Gastrocnemius medialis (tissue), 4 donors: ENCODE measurements at regions of chr11 and their contacts with region 1.

Region 1: GRCh38 chr11:130069684-130070108 is at the start of gene APLP2:
- DNase-seq: peak; percentile 99
- ATAC-seq: peak; percentile 88 to 91
- H3K4me3 ChIP-seq: peak within 1 kb of the TSS; percentile 82 to 90 (median 86)
- H3K27ac ChIP-seq: peak within 1 kb of the TSS; percentile 88 to 94 (median 90)
- H3K4me1 ChIP-seq: peaks cover 14 to 24% of the 10 kb centered on the region in 2 donors
- H3K27me3 ChIP-seq: no peaks in the 10 kb centered on the region
- CTCF ChIP-seq: no peak
- POLR2A ChIP-seq: peak; percentile 85 to 92
- total RNA-seq, gene APLP2: 80.4 to 110 (median 82.1) TPM

Region 2: GRCh38 chr11:129593098-129593497 is 476.6 kb before region 1 on chr11:
- in situ Hi-C with region 1: no loop called
- intact Hi-C with region 1: no loop called
- DNase-seq: no peak
- ATAC-seq: no peak
- H3K4me3 ChIP-seq: no peak overlapping the region
- H3K27ac ChIP-seq: no peak overlapping the region
- H3K4me1 ChIP-seq: no peaks in the 10 kb centered on the region
- H3K27me3 ChIP-seq: no peaks in the 10 kb centered on the region
- CTCF ChIP-seq: no peak
- POLR2A ChIP-seq: no peak

Region 3: DNA sequence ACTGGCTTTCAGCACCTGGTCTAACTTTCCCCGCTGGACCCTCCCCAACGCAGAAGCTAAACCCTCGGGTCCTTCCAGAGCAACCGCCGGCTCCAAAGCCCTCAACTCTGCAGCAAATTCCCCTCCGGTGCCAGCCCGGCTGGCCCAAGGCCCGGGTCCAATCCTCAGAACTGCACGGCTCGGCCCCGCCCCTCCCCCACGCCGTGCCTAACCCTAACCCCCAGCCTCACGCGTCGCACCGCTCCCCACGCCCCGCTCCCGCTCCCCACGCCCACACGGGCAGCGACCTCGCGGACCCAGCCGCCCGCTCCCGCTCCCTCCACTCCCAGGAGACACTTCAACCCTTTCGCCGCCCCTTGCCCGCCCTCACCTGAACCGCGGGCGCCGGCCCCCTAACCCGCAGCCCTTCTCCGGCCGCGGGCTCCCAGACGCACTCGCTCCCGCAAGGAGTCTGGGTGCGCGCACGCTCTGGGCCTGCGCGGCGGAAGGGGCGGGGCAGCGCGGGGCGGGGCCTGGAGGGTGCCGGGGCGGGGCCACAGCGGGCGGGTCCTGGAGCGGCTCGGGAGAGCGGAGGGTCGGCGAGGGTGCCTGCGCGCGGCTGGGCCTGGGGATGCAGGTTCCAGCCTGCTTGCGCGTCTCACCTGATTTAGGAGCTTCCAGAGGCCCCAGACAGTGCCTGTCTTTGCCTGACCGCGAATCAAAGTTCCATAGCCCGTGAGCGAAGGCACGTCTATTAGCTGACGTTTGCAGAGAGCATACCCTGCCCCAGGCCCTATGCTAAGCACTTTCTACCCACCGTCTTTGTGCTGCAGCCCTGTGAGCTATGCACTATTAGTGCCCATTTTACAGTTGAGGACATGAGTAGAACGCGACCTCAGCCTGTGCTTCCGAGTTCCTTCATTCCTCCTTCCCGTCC is 174.3 kb before region 1 on chr11 and contains the start of gene NFRKB:
- in situ Hi-C with region 1: no loop called
- intact Hi-C with region 1: loop called (anchors 5 kb)
- DNase-seq: peak; percentile 59 to 73
- ATAC-seq: peak; percentile 91 to 93
- H3K4me3 ChIP-seq: peak within 1 kb of the TSS; percentile 76 to 100 (median 96)
- H3K27ac ChIP-seq: peak within 1 kb of the TSS; percentile 85 to 96 (median 92)
- H3K4me1 ChIP-seq: peaks cover 13 to 18% of the 10 kb centered on the region in 2 donors
- H3K27me3 ChIP-seq: no peaks in the 10 kb centered on the region
- CTCF ChIP-seq: no peak
- POLR2A ChIP-seq: peak; percentile 53 to 57
- total RNA-seq, gene NFRKB: 22.5 to 34.3 (median 23.4) TPM

Region 4: DNA sequence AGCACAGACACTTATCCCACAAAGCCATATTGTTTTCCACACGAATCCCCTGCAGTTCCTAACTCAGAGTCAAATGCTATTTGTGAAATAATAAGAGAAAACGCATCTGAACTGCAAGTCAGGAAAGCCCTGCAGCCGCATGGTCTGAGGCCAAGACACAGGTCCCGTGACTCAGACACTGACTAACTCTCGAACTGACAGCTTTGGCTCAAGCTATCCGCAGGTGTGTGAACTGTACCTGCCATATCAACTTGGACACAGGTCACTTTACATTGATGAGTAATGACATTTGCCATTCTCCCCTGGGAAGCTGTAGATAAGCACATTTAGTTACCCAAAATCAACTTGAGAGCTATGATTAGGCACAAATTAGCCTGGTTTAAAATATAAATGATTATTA is 139.4 kb before region 1 on chr11:
- in situ Hi-C with region 1: no loop called
- intact Hi-C with region 1: loop called (anchors 2 kb)
- DNase-seq: no peak
- ATAC-seq: no peak
- H3K4me3 ChIP-seq: no peak overlapping the region
- H3K27ac ChIP-seq: no peak overlapping the region
- H3K4me1 ChIP-seq: no peaks in the 10 kb centered on the region
- H3K27me3 ChIP-seq: no peaks in the 10 kb centered on the region
- CTCF ChIP-seq: no peak
- POLR2A ChIP-seq: no peak

Region 5: DNA sequence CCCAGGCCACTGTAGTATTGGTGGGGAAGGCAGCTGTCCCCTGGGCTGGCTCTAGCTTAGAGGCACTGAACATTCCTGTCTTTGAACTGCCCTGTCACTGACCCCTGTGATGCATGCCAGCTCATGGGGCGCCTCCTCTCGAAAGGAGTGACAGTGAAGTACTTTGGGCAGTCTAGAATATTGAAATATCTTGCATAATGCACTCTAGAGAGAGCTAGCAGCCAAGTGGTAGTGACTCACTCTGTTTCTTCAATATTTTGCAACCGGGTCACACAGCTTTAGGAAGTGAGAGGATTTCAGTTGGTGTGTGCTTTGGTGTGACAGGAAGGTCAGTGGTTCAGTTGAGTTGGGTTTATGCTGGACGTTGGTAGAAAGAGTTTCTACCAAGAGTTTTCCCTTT is 54.4 kb after region 1 on chr11:
- in situ Hi-C with region 1: loop called in 1 of 4 experiments (anchors 10 kb)
- intact Hi-C with region 1: no loop called
- DNase-seq: peak; percentile 52 to 88
- ATAC-seq: peak; percentile 99 to 100
- H3K4me3 ChIP-seq: no peak overlapping the region
- H3K27ac ChIP-seq: peak overlapping the region; percentile 60 to 66 (median 62)
- H3K4me1 ChIP-seq: peaks cover 15 to 30% of the 10 kb centered on the region in 2 donors
- H3K27me3 ChIP-seq: no peaks in the 10 kb centered on the region
- CTCF ChIP-seq: no peak
- POLR2A ChIP-seq: no peak

Region 6: DNA sequence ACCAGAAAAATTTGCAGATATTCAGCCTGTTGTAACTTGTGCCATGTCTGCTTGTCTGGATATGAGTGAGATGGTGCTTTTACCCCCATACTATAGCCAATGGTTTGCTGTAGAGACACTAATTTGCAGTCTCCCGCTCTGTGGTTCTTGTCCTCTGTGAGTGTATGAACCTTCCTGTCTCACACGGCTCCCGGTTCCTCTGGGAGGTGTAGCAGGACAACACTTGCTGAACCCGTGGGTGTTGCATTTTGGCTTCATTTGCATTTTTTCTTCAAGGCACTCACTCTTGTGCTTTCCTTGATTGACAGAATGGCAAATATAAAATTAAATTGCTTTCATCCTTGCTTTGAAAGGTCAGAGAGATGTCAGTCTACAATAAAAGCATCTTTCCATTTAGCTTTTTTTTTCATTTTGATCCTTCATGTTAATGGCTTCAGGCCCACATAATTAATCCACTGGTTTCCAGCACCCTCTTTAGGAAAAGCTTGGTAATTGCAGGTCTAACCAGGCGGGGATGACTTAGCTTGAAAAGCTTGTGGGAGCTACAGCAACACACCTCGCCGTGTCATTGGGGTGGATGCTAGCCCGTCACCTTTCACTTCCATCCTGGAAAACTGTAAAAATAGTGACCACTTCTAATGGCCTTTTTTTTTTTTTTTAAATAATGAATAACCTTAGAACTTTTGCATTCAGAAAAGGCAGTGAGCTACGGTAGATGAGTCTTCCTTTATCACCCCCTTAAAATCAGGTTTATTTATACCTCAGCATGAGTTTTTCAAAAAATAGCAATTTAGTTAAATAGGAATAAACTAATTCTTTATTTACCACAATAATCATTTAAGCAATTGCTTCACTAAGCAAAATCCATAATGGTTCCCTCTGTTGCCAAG is 62.5 kb after region 1 on chr11:
- in situ Hi-C with region 1: loop called in 1 of 4 experiments (anchors 10 kb)
- intact Hi-C with region 1: loop called (anchors 2 kb)
- DNase-seq: peak in 1 of 2 donors; percentile 38
- ATAC-seq: peak; percentile 76 to 95
- H3K4me3 ChIP-seq: no peak overlapping the region
- H3K27ac ChIP-seq: no peak overlapping the region
- H3K4me1 ChIP-seq: peaks cover 12% of the 10 kb centered on the region in 2 donors
- H3K27me3 ChIP-seq: no peaks in the 10 kb centered on the region
- CTCF ChIP-seq: peak; percentile 59 to 80 (median 74)
- POLR2A ChIP-seq: no peak

Region 7: GRCh38 chr11:130189492-130190210 is 120.0 kb after region 1 on chr11:
- in situ Hi-C with region 1: no loop called
- intact Hi-C with region 1: no loop called
- DNase-seq: no peak
- ATAC-seq: no peak
- H3K4me3 ChIP-seq: no peak overlapping the region
- H3K27ac ChIP-seq: no peak overlapping the region
- H3K4me1 ChIP-seq: no peaks in the 10 kb centered on the region
- H3K27me3 ChIP-seq: no peaks in the 10 kb centered on the region
- CTCF ChIP-seq: no peak
- POLR2A ChIP-seq: no peak

Region 8: GRCh38 chr11:130246738-130247137 is 177.0 kb after region 1 on chr11:
- in situ Hi-C with region 1: no loop called
- intact Hi-C with region 1: no loop called
- DNase-seq: no peak
- ATAC-seq: no peak
- H3K4me3 ChIP-seq: no peak overlapping the region
- H3K27ac ChIP-seq: no peak overlapping the region
- H3K4me1 ChIP-seq: peaks cover 7 to 12% of the 10 kb centered on the region in 2 donors
- H3K27me3 ChIP-seq: no peaks in the 10 kb centered on the region
- CTCF ChIP-seq: no peak
- POLR2A ChIP-seq: no peak

Region 9: GRCh38 chr11:130314750-130315285 is 245.1 kb after region 1 on chr11 and contains the start of gene ZBTB44:
- in situ Hi-C with region 1: no loop called
- intact Hi-C with region 1: loop called (anchors 10 kb)
- DNase-seq: peak; percentile 88 to 91
- ATAC-seq: peak; percentile 83 to 86
- H3K4me3 ChIP-seq: peak within 1 kb of the TSS; percentile 79 to 90 (median 86)
- H3K27ac ChIP-seq: peak within 1 kb of the TSS; percentile 93 to 99 (median 95)
- H3K4me1 ChIP-seq: peaks cover 28 to 42% of the 10 kb centered on the region in 2 donors
- H3K27me3 ChIP-seq: no peaks in the 10 kb centered on the region
- CTCF ChIP-seq: no peak
- POLR2A ChIP-seq: no peak
- total RNA-seq, gene ZBTB44: 57.4 to 108 (median 68.8) TPM